ENCODE measurements at regions of chrX and their contacts with region 1.

Region 1: DNA sequence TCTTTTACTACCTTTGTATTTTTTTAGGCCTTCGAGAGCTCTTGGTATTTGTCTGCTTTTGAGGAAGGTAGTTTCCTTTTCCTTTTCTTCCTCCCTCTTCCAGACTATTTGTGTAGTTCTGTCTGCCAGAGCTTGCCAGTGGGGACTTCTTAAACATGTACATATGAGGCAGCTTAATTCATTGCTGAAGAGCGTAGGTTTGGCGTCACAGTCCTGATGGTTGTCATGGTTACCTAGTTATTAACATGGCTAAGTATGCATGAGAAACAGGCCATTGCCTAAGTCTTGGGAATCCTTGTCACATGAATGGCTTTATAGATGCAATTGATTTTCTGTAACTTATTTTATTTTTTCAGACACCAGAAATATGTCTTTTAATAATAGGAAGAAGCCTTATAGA is 48.5 kb upstream of the ARMCX2 start:
- DNase-seq: no peak

Region 2: DNA sequence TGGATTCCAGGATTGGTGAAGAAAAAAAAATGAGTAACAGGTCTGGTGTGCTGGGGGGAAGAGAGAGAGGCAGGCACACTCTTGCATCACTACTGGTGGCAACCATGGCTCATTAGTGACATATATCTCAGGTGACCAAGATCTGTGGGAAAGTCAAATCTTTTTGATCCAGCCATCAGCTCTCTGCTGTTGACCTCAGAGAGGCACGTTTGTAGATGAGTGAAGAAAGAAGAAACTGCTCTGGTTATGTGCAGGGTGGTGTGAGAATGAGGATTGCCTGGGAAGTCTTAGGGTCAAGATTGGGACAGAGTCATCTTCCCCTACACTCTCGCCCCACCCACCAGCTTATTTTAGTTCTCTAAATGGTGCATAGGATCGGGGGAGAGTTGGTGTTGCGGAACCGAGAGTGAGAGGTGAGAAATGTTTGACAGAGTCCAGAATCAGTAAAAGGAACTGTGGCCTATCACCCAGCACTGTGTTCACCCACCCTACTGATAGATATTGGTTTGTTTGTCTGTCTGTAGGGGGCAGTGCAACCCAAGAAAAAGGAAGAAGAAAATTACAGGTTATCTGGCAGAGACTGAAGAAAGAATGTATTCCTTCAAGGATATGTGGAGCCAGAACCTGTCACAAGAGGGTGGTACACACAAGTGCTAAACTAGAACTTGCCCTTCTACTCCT is 112.3 kb before region 1 on chrX:
- intact Hi-C with region 1: no loop called
- DNase-seq: no peak

Region 3: GRCh38 chrX:101693476-101693875 is 14.7 kb before region 1 on chrX:
- intact Hi-C with region 1: no loop called
- DNase-seq: no peak

Region 4: GRCh38 chrX:101764538-101764937 is 56.4 kb after region 1 on chrX:
- intact Hi-C with region 1: loop called in 1 of 2 experiments (anchors 10 kb)
- DNase-seq: no peak

Measured in posterior vena cava (tissue), 2 donors.